ENCODE measurements at regions of chr2 and their contacts with region 1.

Region 1: GRCh38 chr2:129748653-129749052 is 230.8 kb upstream of the RAB6C start:
- DNase-seq: peak; percentile 69 to 73
- H3K4me3 ChIP-seq: no peak overlapping the region
- H3K4me3 Mint-ChIP-seq: no peak overlapping the region
- H3K27ac Mint-ChIP-seq: no peak overlapping the region
- H3K4me1 ChIP-seq: no peaks in the 10 kb centered on the region
- H3K4me1 Mint-ChIP-seq: no peaks in the 10 kb centered on the region
- H3K27me3 ChIP-seq: no peaks in the 10 kb centered on the region; the same call in 1 of the 2 replicates
- H3K27me3 Mint-ChIP-seq: peaks cover 9% of the 10 kb centered on the region
- CTCF ChIP-seq: peak; percentile 69 to 82

Region 2: DNA sequence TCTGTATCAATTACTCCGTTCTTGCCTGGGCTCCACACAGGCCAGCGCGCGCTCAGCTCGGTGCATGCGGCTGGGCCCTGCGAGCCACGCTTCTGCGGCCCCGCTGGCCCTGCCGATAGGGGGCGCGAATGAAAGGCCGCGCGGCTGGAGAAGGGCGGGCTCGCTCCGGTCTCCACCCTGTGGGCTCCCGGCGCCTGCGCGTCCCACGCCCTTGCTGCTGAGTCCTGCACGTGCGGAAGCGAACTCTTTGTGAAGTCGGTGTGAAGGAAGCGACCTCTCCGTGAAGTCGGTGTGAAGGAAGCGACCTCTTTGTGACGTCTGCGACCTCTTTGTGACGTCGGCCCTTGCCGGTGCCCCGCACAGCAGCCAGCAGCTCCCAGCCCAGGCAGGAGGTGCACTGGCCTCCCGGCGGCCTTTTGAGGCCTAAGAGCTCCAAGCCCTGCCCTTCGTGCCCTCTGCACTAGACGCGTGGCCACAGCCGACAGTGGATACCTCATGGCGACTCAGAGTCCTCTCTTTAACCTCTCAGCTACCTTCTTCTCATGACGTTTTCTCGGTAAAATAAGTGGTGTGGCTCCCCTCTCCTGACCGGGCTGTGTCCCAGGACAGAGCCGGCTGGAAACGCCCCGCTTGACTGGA is 161.1 kb before region 1 on chr2:
- CTCF ChIA-PET with region 1: interaction called, 16 read pairs
- POLR2A ChIA-PET with region 1: no interaction called
- intact Hi-C with region 1: no loop called
- DNase-seq: no peak
- H3K4me3 ChIP-seq: no peak overlapping the region
- H3K4me3 Mint-ChIP-seq: no peak overlapping the region
- H3K27ac Mint-ChIP-seq: no peak overlapping the region
- H3K4me1 ChIP-seq: no peaks in the 10 kb centered on the region
- H3K4me1 Mint-ChIP-seq: no peaks in the 10 kb centered on the region
- H3K27me3 ChIP-seq: peaks cover 2% of the 10 kb centered on the region; the same call in 1 of the 2 replicates
- H3K27me3 Mint-ChIP-seq: peaks cover 17% of the 10 kb centered on the region
- CTCF ChIP-seq: no peak

Region 3: DNA sequence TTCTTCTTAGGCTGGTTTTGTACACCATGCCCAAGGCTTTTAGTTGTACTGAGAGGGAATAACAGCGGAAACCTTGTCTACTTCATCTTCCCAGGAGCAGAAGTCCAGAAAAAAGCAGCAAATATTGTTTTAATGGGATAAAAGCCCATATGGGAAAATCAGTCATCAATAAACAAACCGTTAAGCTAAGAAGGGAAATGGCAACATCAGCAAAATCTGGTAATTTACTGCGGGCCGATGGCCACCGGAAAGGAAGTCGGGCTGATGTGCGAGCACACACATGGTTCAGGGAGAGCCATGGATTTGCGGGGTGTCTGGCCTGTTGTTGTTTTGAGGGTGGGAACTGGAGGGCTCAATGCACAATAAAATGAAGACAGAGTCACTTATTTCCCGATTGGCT is 69.9 kb before region 1 on chr2:
- CTCF ChIA-PET with region 1: no interaction called
- POLR2A ChIA-PET with region 1: no interaction called
- intact Hi-C with region 1: loop called (anchors 5 kb)
- DNase-seq: no peak
- H3K4me3 ChIP-seq: no peak overlapping the region
- H3K4me3 Mint-ChIP-seq: no peak overlapping the region
- H3K27ac Mint-ChIP-seq: no peak overlapping the region
- H3K4me1 ChIP-seq: no peaks in the 10 kb centered on the region
- H3K4me1 Mint-ChIP-seq: no peaks in the 10 kb centered on the region
- H3K27me3 ChIP-seq: no peaks in the 10 kb centered on the region
- H3K27me3 Mint-ChIP-seq: peaks cover 3% of the 10 kb centered on the region
- CTCF ChIP-seq: no peak

Region 4: DNA sequence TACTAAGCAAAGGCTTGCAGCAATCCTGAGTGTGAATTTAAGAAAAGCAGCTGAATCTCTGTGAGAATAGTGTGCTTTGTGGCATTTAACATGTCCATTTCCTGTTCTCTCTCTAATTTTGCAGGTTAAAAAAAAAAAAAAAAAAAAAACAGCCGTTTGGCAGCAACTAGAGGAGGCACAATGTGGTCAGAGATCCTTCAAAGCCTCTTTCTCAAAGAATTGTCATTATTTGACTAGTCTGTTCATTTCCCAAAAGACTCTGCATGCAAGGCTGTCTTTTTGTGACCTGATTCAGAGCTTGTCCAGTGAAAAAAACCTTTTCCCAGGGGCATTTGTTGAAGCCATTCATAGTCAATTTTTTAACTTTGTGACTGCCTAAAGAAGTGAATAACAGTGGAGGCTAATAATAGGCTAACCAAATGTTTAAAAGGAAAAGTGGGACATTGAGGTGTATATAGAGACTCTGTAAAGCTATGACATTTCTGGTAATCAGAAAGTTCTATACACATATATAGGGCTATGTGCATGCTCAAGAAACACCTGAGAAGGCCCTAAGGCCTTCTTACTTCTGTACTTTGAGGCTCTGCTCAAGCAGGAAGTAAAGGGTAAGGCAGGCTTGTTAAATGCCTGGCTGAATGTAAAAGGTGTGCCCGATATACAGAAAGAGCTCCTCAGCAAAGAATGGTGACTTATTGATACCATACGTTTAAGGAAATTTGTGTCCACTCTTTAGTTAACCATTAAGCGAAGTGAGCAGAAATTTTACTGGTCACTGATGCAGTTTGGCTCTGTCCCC is 58.8 kb before region 1 on chr2:
- CTCF ChIA-PET with region 1: no interaction called
- POLR2A ChIA-PET with region 1: no interaction called
- intact Hi-C with region 1: no loop called
- DNase-seq: no peak
- H3K4me3 ChIP-seq: no peak overlapping the region
- H3K4me3 Mint-ChIP-seq: no peak overlapping the region
- H3K27ac Mint-ChIP-seq: no peak overlapping the region
- H3K4me1 ChIP-seq: no peaks in the 10 kb centered on the region
- H3K4me1 Mint-ChIP-seq: no peaks in the 10 kb centered on the region
- H3K27me3 ChIP-seq: no peaks in the 10 kb centered on the region
- H3K27me3 Mint-ChIP-seq: peaks cover 8% of the 10 kb centered on the region
- CTCF ChIP-seq: no peak

Region 5: GRCh38 chr2:129891372-129892320 is 143.0 kb after region 1 on chr2:
- CTCF ChIA-PET with region 1: no interaction called
- POLR2A ChIA-PET with region 1: no interaction called
- intact Hi-C with region 1: no loop called
- DNase-seq: no peak
- H3K4me3 ChIP-seq: no peak overlapping the region
- H3K4me3 Mint-ChIP-seq: no peak overlapping the region
- H3K27ac Mint-ChIP-seq: no peak overlapping the region
- H3K4me1 ChIP-seq: no peaks in the 10 kb centered on the region; the same call in 1 of the 2 replicates
- H3K4me1 Mint-ChIP-seq: no peaks in the 10 kb centered on the region
- H3K27me3 ChIP-seq: peaks cover 1% of the 10 kb centered on the region; the same call in 1 of the 2 replicates
- H3K27me3 Mint-ChIP-seq: peaks cover 30% of the 10 kb centered on the region
- CTCF ChIP-seq: no peak